Ascending aorta (tissue), 2 donors: ENCODE measurements at regions of chr5 and their contacts with region 1.

Region 1: DNA sequence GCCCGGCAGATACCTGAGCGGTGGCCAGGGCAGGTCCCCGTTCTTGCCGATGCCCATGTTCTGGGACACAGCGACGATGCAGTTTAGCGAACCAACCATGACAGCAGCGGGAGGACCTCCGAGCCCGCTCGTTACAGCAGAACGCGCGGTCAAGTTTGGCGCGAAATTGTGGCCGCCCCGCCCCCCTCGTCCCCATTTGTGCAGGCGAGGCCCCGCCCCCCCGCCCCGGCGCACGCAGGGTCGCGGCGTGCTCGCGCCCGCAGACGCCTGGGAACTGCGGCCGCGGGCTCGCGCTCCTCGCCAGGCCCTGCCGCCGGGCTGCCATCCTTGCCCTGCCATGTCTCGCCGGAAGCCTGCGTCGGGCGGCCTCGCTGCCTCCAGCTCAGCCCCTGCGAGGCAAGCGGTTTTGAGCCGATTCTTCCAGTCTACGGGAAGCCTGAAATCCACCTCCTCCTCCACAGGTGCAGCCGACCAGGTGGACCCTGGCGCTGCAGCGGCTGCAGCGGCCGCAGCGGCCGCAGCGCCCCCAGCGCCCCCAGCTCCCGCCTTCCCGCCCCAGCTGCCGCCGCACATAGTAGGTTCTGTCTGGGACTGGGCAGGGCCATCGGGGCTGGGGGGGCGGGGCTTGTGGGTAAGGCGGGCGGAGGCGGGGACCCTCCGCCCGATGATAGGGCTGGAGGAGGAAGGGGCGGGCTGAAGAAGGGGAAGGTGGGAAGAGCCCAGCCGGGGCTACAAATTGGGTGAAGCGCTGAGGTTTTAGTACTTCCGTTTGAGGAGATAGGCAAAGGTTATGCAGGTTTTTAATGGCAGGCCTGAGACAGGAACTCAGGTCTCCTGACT is at the starts of genes DHFR and MSH3:
- DNase-seq: peak; percentile 20 to 89
- H3K4me3 ChIP-seq: peak within 1 kb of the TSS; percentile 68 to 100
- H3K27ac ChIP-seq: peak within 1 kb of the TSS; percentile 87 to 98
- H3K4me1 ChIP-seq: peaks cover 9 to 15% of the 10 kb centered on the region in 2 donors
- H3K27me3 ChIP-seq: no peaks in the 10 kb centered on the region
- CTCF ChIP-seq: peak in 1 of 3 experiments; percentile 18
- total RNA-seq, gene DHFR: 0.53 TPM
- total RNA-seq, gene MSH3: 8.7 TPM

Region 2: GRCh38 chr5:79612667-79613198 is 1041.9 kb before region 1 on chr5:
- intact Hi-C with region 1: loop called (anchors 10 kb)
- DNase-seq: no peak
- H3K4me3 ChIP-seq: peak overlapping the region; percentile 87 to 99
- H3K27ac ChIP-seq: peak overlapping the region; percentile 95 to 96
- H3K4me1 ChIP-seq: peaks cover 0 to 9% of the 10 kb centered on the region in 2 donors
- H3K27me3 ChIP-seq: no peaks in the 10 kb centered on the region
- CTCF ChIP-seq: no peak

Region 3: DNA sequence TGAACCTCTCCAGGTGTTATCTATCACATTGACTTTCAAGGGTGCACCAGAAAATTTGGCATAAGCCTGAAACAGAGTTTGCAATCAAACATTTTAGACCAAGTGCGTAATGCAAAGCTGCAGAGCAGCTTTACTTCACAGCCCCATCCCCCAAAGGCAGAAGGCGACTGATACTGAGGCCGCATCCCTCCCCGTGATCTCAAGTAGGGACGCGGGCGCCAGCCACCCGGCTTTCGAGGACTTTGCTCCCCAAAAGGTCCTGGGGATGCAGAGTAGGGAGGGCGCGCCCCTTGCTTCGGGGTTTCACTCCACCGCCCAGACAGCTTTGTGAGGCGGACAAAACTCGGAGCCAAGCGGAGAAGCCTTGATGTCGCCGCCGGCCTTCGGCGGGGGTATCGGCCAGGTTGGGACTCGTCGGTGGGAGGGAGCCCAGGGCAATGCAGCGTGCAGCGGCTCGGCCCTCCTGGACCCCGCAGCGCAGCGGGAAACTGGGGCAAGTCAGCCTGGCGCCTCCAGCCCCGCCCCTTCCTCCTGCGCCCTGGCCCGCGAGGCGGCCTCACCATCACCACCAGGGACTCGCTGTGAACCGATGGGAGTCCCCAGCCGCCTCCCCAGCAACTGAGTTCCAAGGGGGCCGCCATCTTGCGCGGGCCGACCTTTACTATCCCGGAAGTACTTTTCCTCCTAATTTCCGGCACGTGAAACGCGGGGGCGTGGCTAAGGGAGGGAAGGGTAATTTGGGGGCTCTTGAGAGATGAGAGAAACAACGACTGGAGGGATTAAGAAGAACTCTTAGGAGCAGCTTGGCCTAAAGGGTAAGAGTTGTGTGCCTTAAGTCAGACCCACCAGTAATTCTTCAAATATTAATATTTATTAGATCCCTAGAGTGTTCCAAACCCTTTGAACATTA is 663.8 kb before region 1 on chr5 and contains the start of gene MTX3:
- intact Hi-C with region 1: loop called (anchors 5 kb)
- DNase-seq: peak; percentile 30 to 88
- H3K4me3 ChIP-seq: peak within 1 kb of the TSS; percentile 64 to 89
- H3K27ac ChIP-seq: peak within 1 kb of the TSS; percentile 56 to 69
- H3K4me1 ChIP-seq: peaks cover 0 to 8% of the 10 kb centered on the region in 2 donors
- H3K27me3 ChIP-seq: no peaks in the 10 kb centered on the region
- CTCF ChIP-seq: no peak
- total RNA-seq, gene MTX3: 7.5 TPM

Region 4: GRCh38 chr5:80083101-80083890 is 571.3 kb before region 1 on chr5:
- intact Hi-C with region 1: loop called (anchors 10 kb)
- DNase-seq: peak in 1 of 2 donors; percentile 65
- H3K4me3 ChIP-seq: peak overlapping the region; percentile 42 to 54
- H3K27ac ChIP-seq: peak overlapping the region; percentile 77 to 81
- H3K4me1 ChIP-seq: no peaks in the 10 kb centered on the region
- H3K27me3 ChIP-seq: no peaks in the 10 kb centered on the region
- CTCF ChIP-seq: peak; percentile 49 to 72 (median 60)

Region 5: GRCh38 chr5:80407735-80408482 is 246.7 kb before region 1 on chr5 and contains the start of gene ZFYVE16:
- intact Hi-C with region 1: loop called (anchors 2 kb)
- DNase-seq: peak; percentile 91 to 99
- H3K4me3 ChIP-seq: peak within 1 kb of the TSS; percentile 71 to 78
- H3K27ac ChIP-seq: peak within 1 kb of the TSS; percentile 89 to 95
- H3K4me1 ChIP-seq: peaks cover 3 to 15% of the 10 kb centered on the region in 2 donors
- H3K27me3 ChIP-seq: no peaks in the 10 kb centered on the region
- CTCF ChIP-seq: peak; percentile 39 to 57 (median 46)
- total RNA-seq, gene ZFYVE16: 10.0 TPM

Region 6: GRCh38 chr5:80487829-80488721 is 166.5 kb before region 1 on chr5 and contains the start of gene FAM151B:
- intact Hi-C with region 1: loop called (anchors 5 kb)
- DNase-seq: peak; percentile 42 to 89
- H3K4me3 ChIP-seq: peak within 1 kb of the TSS; percentile 67 to 74
- H3K27ac ChIP-seq: peak within 1 kb of the TSS; percentile 70 to 76
- H3K4me1 ChIP-seq: no peaks in the 10 kb centered on the region
- H3K27me3 ChIP-seq: no peaks in the 10 kb centered on the region
- CTCF ChIP-seq: peak in 1 of 3 experiments; percentile 14
- total RNA-seq, gene FAM151B: not detected

Region 7: GRCh38 chr5:81301271-81302015 is 646.8 kb after region 1 on chr5 and contains the start of gene ZCCHC9:
- intact Hi-C with region 1: loop called (anchors 2 kb)
- DNase-seq: peak; percentile 74 to 96
- H3K4me3 ChIP-seq: peak within 1 kb of the TSS; percentile 77 to 96
- H3K27ac ChIP-seq: peak within 1 kb of the TSS; percentile 88 to 93
- H3K4me1 ChIP-seq: peaks cover 5 to 16% of the 10 kb centered on the region in 2 donors
- H3K27me3 ChIP-seq: no peaks in the 10 kb centered on the region
- CTCF ChIP-seq: peak in 2 of 3 experiments; percentile 17 to 19
- total RNA-seq, gene ZCCHC9: 10.5 TPM